Dorsolateral prefrontal cortex (tissue), 120 donors: ENCODE measurements at regions of chr9 and their contacts with region 1.

Region 1: GRCh38 chr9:70352802-70353201 is 61.7 kb downstream of the KLF9 start:
- DNase-seq: no peak
- H3K4me3 ChIP-seq: no peak overlapping the region
- H3K27ac ChIP-seq: peak overlapping the region in 7 of 59 donors; percentile 0 to 29 (median 8)
- H3K27me3 ChIP-seq: no peaks in the 10 kb centered on the region
- CTCF ChIP-seq: peak in 55 of 56 donors; percentile 15 to 87 (median 63)

Region 2: DNA sequence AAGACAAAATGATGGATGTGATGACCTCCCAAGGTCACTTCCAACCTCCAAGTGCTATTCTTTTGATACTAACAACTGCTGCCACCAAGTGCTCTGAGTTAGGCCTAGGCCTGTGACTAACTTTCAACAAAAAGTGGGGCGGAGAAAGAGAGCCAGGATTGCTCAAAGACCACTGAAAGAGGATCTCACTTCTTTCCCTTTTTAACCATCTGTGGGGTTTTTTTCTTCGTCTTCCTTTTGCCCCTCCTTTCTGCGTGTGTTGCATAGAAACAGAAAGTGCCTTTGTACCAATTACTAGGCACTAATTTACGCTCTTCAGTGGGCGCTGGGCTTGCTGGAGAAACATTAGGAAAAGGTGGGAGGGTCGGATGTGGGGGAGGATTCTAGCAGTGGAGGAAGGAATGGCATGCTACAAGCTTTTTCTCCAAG is 53.6 kb after region 1 on chr9:
- intact Hi-C with region 1: loop called (anchors 5 kb)
- DNase-seq: no peak
- H3K4me3 ChIP-seq: peak overlapping the region in 41 of 59 donors; percentile 2 to 58 (median 28)
- H3K27ac ChIP-seq: peak overlapping the region in 58 of 59 donors; percentile 5 to 89 (median 70)
- H3K27me3 ChIP-seq: no peaks in the 10 kb centered on the region
- CTCF ChIP-seq: peak in 4 of 56 donors; percentile 6 to 16 (median 14)

Region 3: DNA sequence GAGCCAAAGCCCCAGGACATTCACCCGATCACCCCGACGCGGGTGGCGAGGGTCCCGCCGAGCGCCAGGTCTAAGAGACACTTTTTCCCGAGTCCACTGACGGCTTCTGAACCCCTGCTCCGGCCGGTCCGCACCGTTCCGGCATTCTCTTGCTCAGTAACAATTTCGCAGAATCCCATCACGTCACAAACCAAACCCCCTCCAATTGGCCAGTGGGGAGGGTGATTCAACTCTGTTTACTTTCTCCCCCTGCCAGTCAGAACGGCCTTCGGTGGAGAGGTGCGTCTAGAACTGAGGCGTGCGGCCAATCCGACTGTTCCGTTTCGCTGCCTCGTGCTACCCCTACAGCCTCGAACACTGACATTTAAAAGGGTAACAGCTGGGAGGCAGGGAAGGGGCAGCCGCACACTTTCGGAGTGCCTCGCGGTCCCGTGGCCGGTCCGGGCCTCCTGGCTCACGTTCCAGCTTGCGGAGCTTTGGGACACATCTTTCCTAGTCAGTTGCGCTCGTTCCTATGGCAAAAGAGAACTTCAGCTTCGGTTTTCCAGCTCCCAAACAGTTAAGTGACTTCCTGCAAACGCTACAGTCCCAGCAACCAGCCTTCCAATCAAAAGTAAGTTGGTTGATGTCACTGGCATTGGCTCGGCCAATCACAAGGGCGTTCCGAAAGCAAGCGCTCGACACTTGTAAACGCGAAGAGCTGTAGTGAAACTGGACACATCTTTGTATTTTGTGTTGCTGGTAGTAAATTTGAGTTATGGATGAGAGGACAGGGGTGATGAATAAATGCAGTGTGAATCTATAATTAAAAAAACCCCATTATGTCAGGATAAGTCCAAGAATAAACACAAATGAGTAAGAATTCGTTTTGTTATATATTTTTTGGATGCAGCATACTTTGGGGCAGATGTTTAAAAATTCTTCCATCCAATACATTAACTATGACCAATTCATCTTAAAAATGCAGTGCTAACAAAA is 61.3 kb after region 1 on chr9 and contains the start of gene KLF9:
- intact Hi-C with region 1: loop called (anchors 5 kb)
- DNase-seq: peak; percentile 82 to 97 (median 94)
- H3K4me3 ChIP-seq: peak within 1 kb of the TSS; percentile 63 to 99 (median 93)
- H3K27ac ChIP-seq: peak within 1 kb of the TSS; percentile 72 to 100 (median 99)
- H3K27me3 ChIP-seq: no peaks in the 10 kb centered on the region
- CTCF ChIP-seq: peak in 8 of 56 donors; percentile 4 to 16 (median 10)
- total RNA-seq, gene KLF9: 38.3 to 97.2 (median 59.3) TPM

Region 4: DNA sequence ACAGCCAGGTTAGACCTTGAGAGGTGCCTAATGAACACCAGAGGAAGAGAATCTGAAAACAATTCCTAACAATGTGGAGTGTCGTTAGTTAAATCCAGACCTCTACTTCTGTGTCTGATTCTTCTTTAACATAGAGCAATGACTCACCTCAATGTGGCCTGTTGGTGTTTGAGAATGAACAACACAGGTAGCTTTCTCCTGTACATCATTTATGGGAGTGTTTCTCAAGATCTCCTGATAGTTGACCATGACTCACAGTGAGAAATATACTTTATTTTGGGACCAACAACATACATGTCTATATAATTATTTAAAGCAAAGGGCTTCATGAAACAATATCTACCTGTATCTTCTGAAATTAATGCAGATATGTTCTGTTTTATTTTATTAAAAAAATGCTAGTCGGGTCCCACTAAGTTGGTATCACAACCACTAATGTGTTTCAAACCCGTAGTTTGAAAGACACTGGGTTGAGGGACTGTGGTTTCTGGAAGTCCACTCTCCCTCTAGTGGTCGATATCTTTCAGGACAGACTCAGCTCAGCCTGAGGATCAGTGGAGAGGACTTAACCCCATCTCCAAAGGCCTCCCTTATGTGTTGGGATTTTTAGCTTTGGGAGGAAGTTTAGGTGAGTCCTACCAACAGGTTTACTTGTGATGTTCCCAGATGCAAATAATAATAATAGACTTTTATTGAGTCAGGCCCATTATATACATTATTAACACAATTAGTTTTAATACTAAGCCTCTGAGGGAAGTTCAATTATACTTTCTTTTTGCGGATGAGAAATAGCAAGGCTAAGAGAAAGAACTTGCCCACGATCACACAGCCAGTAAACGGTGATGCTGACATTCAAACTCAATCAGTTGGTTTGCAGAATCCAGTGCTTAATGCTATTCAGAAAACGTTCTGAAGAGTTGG is 131.7 kb after region 1 on chr9:
- intact Hi-C with region 1: loop called in 1 of 2 experiments (anchors 5 kb)
- DNase-seq: peak in 2 of 10 donors; percentile 41 to 52
- H3K4me3 ChIP-seq: no peak overlapping the region
- H3K27ac ChIP-seq: peak overlapping the region in 46 of 59 donors; percentile 14 to 98 (median 58)
- H3K27me3 ChIP-seq: no peaks in the 10 kb centered on the region
- CTCF ChIP-seq: peak; percentile 59 to 91 (median 84)

Region 5: DNA sequence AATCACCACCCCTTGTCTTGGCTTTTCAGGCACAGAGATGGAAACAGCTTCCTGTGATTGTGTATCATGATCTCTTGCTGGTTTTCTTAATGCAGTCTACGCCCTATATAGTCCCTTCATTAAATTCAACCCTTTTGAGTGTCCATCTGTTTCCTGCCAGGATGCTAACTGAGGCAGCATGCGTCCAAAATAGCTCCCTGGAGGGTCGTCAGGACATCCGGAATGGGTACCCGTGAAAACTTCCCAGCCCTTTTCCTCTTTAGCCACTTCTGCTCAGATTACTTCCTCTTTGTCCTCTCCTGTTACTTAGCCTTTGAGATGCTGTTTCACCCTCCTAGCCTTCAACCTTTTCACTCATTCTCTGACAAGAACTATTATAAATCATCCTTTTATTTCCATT is 141.4 kb after region 1 on chr9:
- intact Hi-C with region 1: loop called in 1 of 2 experiments (anchors 5 kb)
- DNase-seq: no peak
- H3K4me3 ChIP-seq: peak overlapping the region in 1 of 59 donors; percentile 20
- H3K27ac ChIP-seq: peak overlapping the region in 9 of 59 donors; percentile 4 to 61 (median 40)
- H3K27me3 ChIP-seq: no peaks in the 10 kb centered on the region
- CTCF ChIP-seq: no peak